ENCODE measurements at regions of chr1 and their contacts with region 1.

Region 1: DNA sequence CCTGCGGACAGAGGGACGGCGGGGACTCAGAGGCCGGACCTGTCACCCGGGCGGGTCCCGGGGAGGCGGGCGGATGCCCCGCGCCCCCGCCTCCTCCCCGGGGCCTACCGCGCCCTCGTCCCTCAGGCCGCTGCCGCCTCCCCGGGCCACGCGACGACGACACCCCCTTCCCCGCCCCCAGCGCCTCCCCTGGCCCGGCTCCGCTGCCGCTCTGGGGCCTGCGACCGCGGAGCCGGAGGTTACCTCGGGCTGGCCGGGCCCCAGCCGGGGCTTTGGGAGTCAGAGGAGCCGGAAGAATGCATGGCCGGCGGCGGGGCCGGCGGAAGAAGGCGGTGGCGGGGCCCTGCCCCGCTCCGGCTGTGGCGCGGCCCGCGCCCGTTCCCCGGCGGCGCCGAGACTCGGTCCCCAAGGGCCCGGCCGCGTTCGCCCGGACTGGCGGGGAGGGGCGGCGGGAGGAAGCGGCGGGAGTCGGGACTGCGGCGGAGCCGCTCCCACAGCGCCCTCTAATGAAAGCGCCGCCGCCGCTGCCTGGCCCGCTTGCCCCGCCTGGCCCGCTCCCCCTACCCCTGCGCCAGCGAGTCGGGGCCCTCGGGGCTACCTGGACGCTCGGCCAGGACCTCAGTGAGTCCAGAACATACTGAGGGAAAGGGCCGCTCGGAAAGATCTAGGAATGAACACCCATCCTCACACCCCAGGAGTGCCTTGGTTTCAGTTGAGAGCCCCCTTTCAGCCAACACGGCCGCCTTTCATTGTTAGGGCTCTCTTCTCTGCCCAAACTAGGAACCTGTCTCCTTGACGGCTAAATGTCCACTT is at the start of gene LPGAT1:
- DNase-seq: peak; percentile 28 to 81 (median 54)
- ATAC-seq: peak; percentile 92
- H3K4me3 ChIP-seq: peak within 1 kb of the TSS; percentile 68
- H3K4me3 Mint-ChIP-seq: peak within 1 kb of the TSS; percentile 88 to 97 (median 90)
- H3K27ac ChIP-seq: peak within 1 kb of the TSS; percentile 64
- H3K27ac Mint-ChIP-seq: peak within 1 kb of the TSS; percentile 60 to 94 (median 85)
- H3K4me1 ChIP-seq: peaks cover 20 to 40% of the 10 kb centered on the region in 2 donors
- H3K4me1 Mint-ChIP-seq: peaks cover 34 to 69% (median 64%) of the 10 kb centered on the region in 7 donors
- H3K27me3 ChIP-seq: no peaks in the 10 kb centered on the region
- H3K27me3 Mint-ChIP-seq: peaks cover 0 to 3% (median 0%) of the 10 kb centered on the region in 5 donors
- total RNA-seq, gene LPGAT1: 11.7 to 76.1 (median 19.3) TPM

Region 2: DNA sequence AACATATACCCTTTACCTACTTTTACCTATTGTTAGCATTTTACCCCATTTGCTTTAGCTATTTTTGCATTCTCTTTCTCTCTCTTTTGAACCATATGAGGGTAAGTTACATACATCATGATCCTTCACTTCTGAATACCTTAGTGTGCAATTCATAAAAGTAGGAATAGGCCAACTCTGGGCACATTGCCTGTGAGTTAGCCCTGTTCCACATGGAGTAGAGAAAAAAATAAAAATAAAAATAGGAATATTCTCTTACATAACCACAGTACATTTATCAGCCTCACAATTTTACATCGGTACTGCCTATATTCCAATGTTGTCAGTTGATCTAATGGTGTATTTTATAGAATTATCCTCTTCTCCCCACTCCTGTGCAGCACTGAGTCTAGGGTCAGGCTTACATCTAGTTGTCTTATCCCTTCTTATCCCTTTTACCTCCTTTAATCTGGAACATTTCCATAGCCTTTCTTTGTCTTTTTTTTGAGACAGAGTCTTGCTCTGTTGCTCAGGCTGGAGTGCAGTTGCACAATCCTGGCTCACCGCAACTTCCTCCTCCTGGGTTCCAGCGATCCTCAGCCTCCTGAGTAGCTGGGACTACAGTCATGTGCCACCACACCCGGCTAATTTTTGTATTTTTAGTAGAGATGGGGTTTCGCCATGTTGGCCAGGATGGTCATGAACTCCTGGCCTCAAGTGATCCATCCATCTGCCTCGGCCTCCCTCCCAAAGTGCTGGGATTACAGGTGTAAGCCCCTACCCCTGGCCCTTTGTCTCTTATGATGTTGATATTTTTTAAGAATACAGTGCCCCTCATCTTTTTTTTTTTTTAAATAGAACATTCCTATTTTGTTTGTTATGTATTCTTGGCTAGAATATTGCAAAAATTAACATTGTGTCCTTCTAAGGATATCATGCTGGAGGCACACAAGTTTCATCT is 240.5 kb before region 1 on chr1:
- CTCF ChIA-PET with region 1: no interaction called
- POLR2A ChIA-PET with region 1: no interaction called
- intact Hi-C with region 1: no loop called
- DNase-seq: no peak
- ATAC-seq: peak; percentile 67
- H3K4me3 ChIP-seq: no peak overlapping the region
- H3K4me3 Mint-ChIP-seq: no peak overlapping the region
- H3K27ac ChIP-seq: no peak overlapping the region
- H3K27ac Mint-ChIP-seq: no peak overlapping the region
- H3K4me1 ChIP-seq: no peaks in the 10 kb centered on the region
- H3K4me1 Mint-ChIP-seq: peaks cover 0 to 6% (median 0%) of the 10 kb centered on the region in 7 donors
- H3K27me3 ChIP-seq: no peaks in the 10 kb centered on the region
- H3K27me3 Mint-ChIP-seq: peaks cover 0 to 24% (median 3%) of the 10 kb centered on the region in 5 donors

Region 3: DNA sequence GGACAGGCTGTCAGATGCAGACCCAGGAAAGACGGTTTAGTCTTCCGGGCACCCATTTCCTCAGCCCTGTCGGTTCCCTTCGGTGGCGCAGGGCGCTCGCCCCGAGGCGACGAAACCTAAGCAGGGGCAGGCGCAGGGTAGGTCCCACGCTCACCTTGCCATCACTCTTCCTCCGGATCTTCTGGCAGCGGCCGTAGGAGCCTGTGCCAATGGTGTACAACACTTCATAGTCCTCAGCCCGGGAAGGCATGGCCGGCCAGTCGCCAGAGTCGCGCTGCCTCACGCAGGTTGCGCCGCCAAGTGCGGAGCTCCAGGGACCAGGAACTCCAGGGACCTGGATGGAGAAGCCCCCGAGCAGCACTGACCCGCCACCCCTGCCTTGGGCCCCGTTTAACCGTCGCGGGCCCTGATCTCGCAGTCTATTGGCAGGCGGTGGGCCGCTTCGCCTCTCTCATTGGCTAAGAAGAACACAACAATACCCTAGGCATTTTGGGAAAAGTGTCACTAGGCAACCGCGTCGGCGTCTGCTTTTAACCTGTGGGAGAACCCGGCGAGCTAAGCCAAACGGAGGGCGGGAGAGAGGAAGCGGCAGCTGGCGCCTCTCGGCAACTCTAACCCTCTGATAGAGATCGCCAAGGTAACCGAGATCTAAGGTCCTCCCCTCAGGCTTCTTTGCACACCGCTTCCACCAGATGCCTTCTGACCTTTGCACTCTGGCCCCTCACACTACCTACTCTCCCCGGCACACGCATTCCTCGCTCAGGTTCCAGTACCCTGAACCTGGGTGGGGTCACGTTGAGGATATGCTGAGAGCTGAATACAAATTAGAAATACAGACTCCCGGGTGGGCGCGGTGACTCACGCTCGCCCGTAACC is 155.1 kb before region 1 on chr1 and contains the start of gene NEK2:
- CTCF ChIA-PET with region 1: no interaction called
- POLR2A ChIA-PET with region 1: no interaction called
- intact Hi-C with region 1: loop called (anchors 1 to 2 kb)
- DNase-seq: peak; percentile 53 to 90 (median 85)
- ATAC-seq: peak; percentile 97
- H3K4me3 ChIP-seq: peak within 1 kb of the TSS; percentile 76
- H3K4me3 Mint-ChIP-seq: peak within 1 kb of the TSS; percentile 88 to 96 (median 92)
- H3K27ac ChIP-seq: peak within 1 kb of the TSS; percentile 56
- H3K27ac Mint-ChIP-seq: peak within 1 kb of the TSS; percentile 45 to 88 (median 80)
- H3K4me1 ChIP-seq: peaks cover 5 to 7% of the 10 kb centered on the region in 2 donors
- H3K4me1 Mint-ChIP-seq: peaks cover 8 to 38% (median 13%) of the 10 kb centered on the region in 7 donors
- H3K27me3 ChIP-seq: no peaks in the 10 kb centered on the region
- H3K27me3 Mint-ChIP-seq: no peaks in the 10 kb centered on the region
- total RNA-seq, gene NEK2: 0.16 to 26.5 (median 0.25) TPM in 4 of 5 experiments, not detected in the other

Region 4: DNA sequence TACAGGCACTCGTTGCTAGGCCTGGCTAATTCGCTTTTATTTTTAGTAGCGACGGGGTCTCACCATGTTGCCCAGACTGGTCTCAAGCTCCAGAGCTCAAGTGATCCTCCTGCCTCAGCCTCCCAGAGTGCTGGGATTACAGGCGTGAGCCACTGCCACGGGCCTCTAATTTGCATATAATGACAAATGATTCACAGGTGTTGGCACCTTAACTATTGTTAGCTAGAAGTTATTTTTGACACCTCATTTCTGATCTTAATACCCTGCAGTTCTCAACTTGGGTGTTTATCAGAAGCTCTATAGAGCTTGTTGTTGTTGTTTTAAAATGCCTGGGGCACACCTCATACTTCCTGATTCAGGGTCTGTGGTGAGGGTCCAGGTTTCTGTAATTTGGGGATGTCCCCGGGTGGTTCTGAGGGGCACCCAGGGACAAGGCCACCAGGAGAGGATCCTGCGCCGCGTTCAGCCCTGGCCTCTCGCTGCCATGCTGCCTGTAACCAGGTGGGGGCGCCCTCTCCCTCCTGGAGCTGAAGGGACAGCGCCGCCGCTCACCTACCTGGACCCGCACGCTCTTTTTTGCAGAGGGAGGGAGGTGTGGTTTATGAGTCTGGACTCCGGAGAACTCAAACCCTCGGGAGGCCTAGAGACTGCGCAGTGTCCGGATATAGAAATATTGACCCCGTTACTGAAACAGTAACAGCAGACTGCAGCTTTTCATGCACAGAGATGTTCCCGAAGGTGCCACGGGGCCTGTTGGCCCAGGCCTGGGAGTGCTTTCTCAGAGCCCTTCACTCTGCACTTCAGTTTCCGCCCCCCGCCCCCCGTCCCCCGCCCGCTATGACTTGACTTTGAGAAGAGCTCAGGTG is 132.1 kb before region 1 on chr1:
- CTCF ChIA-PET with region 1: interaction called, 4 read pairs
- POLR2A ChIA-PET with region 1: no interaction called
- intact Hi-C with region 1: loop called (anchors 1 kb)
- DNase-seq: peak; percentile 60 to 87 (median 72)
- ATAC-seq: peak; percentile 96
- H3K4me3 ChIP-seq: no peak overlapping the region
- H3K4me3 Mint-ChIP-seq: peak overlapping the region; percentile 23 to 83 (median 65)
- H3K27ac ChIP-seq: no peak overlapping the region
- H3K27ac Mint-ChIP-seq: peak overlapping the region in 2 of 9 donors; percentile 5 to 62
- H3K4me1 ChIP-seq: peaks cover 4 to 16% of the 10 kb centered on the region in 2 donors
- H3K4me1 Mint-ChIP-seq: peaks cover 0 to 42% (median 9%) of the 10 kb centered on the region in 7 donors
- H3K27me3 ChIP-seq: no peaks in the 10 kb centered on the region
- H3K27me3 Mint-ChIP-seq: peaks cover 0 to 37% (median 0%) of the 10 kb centered on the region in 5 donors

Region 5: DNA sequence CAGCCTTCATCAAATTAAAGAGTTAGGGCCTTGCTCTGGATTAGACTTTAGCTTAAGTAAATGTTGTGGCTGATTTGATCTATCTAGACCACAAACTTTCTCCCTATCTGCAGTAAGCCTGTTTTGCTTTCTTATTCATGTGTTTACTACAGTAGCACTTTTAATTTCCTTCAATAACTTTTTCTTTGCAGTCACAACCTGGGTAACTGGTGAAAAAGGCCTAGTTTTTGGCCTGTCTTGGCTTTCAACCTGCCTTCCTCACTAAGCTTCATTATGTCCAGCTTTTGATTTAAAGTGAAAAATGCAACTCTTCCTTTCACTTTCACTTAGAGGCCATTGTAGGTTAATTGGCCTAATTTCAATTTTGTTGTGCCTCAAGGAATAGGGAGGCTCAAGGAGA is 12.5 kb after region 1 on chr1:
- CTCF ChIA-PET with region 1: interaction called, 6 read pairs
- POLR2A ChIA-PET with region 1: interaction called, 4 read pairs
- intact Hi-C with region 1: loop called (anchors 1 kb)
- DNase-seq: peak in 2 of 9 donors; percentile 9 to 11
- ATAC-seq: peak; percentile 29
- H3K4me3 ChIP-seq: no peak overlapping the region
- H3K4me3 Mint-ChIP-seq: peak overlapping the region in 9 of 10 donors; percentile 26 to 74 (median 61)
- H3K27ac ChIP-seq: peak overlapping the region; percentile 36
- H3K27ac Mint-ChIP-seq: peak overlapping the region; percentile 64 to 93 (median 81)
- H3K4me1 ChIP-seq: peaks cover 8 to 11% of the 10 kb centered on the region in 2 donors
- H3K4me1 Mint-ChIP-seq: peaks cover 15 to 36% (median 24%) of the 10 kb centered on the region in 7 donors
- H3K27me3 ChIP-seq: no peaks in the 10 kb centered on the region
- H3K27me3 Mint-ChIP-seq: peaks cover 0 to 5% (median 0%) of the 10 kb centered on the region in 5 donors

Region 6: GRCh38 chr1:211859405-211859804 is 28.9 kb after region 1 on chr1:
- CTCF ChIA-PET with region 1: no interaction called
- POLR2A ChIA-PET with region 1: no interaction called
- intact Hi-C with region 1: loop called in 1 of 2 experiments (anchors 2 kb)
- DNase-seq: no peak
- ATAC-seq: no peak
- H3K4me3 ChIP-seq: no peak overlapping the region
- H3K4me3 Mint-ChIP-seq: no peak overlapping the region
- H3K27ac ChIP-seq: no peak overlapping the region
- H3K27ac Mint-ChIP-seq: no peak overlapping the region
- H3K4me1 ChIP-seq: no peaks in the 10 kb centered on the region
- H3K4me1 Mint-ChIP-seq: peaks cover 0 to 10% (median 7%) of the 10 kb centered on the region in 7 donors
- H3K27me3 ChIP-seq: no peaks in the 10 kb centered on the region
- H3K27me3 Mint-ChIP-seq: peaks cover 0 to 28% (median 3%) of the 10 kb centered on the region in 5 donors

Region 7: GRCh38 chr1:212414328-212415106 is 584.0 kb after region 1 on chr1 and contains the start of gene PACC1:
- CTCF ChIA-PET with region 1: no interaction called
- POLR2A ChIA-PET with region 1: no interaction called
- intact Hi-C with region 1: loop called in 1 of 2 experiments (anchors 5 kb)
- DNase-seq: peak; percentile 77 to 89 (median 86)
- ATAC-seq: peak; percentile 98
- H3K4me3 ChIP-seq: peak within 1 kb of the TSS; percentile 98
- H3K4me3 Mint-ChIP-seq: peak within 1 kb of the TSS; percentile 87 to 100 (median 94)
- H3K27ac ChIP-seq: peak within 1 kb of the TSS; percentile 71
- H3K27ac Mint-ChIP-seq: peak within 1 kb of the TSS; percentile 74 to 94 (median 89)
- H3K4me1 ChIP-seq: peaks cover 15 to 19% of the 10 kb centered on the region in 2 donors
- H3K4me1 Mint-ChIP-seq: peaks cover 22 to 46% (median 40%) of the 10 kb centered on the region in 7 donors
- H3K27me3 ChIP-seq: no peaks in the 10 kb centered on the region
- H3K27me3 Mint-ChIP-seq: no peaks in the 10 kb centered on the region
- total RNA-seq, gene PACC1: 7.9 to 13.4 (median 12.0) TPM

Region 8: DNA sequence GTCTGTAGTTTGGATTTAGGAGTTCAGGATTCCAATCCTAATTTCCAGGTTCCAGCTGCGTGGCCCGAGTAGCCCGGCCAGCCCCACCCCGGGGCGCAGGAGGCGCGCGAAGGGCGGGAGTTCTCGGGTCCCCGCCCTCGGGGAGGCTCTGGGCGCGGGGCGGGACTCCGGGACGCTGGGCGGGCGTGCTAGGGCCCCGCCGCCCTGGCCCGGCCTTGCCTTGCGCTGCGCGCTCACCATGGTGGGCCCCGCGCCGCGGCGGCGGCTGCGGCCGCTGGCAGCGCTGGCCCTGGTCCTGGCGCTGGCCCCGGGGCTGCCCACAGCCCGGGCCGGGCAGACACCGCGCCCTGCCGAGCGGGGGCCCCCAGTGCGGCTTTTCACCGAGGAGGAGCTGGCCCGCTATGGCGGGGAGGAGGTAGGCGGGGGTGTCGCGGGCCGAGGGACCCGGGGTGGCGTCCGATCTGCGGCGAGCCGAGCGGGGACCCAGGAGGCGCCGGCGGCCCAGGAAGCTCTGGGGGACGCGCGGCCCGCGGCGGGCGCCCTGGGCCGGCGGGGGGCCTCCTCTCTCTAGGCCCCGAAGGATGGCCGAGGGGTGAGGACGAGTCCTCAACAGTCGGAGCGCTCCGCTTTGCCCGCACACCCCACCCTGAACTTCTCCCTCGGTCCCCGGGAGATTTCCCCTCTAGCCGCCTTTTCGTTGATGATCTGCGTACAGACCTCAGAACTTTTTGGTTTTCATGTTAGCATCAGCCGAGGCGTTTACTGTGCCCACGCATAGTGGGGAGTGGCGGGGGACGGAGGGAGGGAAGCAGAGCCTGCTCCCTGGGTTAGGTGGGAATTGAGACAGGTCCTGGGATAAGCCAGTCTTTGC is 602.4 kb after region 1 on chr1 and contains the start of gene NENF:
- CTCF ChIA-PET with region 1: no interaction called
- POLR2A ChIA-PET with region 1: no interaction called
- intact Hi-C with region 1: loop called in 1 of 2 experiments (anchors 5 kb)
- DNase-seq: peak; percentile 53 to 85 (median 72)
- ATAC-seq: peak; percentile 99
- H3K4me3 ChIP-seq: peak within 1 kb of the TSS; percentile 62
- H3K4me3 Mint-ChIP-seq: peak within 1 kb of the TSS; percentile 77 to 87 (median 82)
- H3K27ac ChIP-seq: peak within 1 kb of the TSS; percentile 77
- H3K27ac Mint-ChIP-seq: peak within 1 kb of the TSS; percentile 42 to 86 (median 63)
- H3K4me1 ChIP-seq: peaks cover 9 to 21% of the 10 kb centered on the region in 2 donors
- H3K4me1 Mint-ChIP-seq: peaks cover 18 to 44% (median 30%) of the 10 kb centered on the region in 7 donors
- H3K27me3 ChIP-seq: no peaks in the 10 kb centered on the region
- H3K27me3 Mint-ChIP-seq: peaks cover 0 to 4% (median 0%) of the 10 kb centered on the region in 5 donors
- total RNA-seq, gene NENF: 16.0 to 23.5 (median 21.0) TPM